Mammary epithelial cell (primary cell): ENCODE measurements at regions of chr7 and their contacts with region 1.

Region 1: GRCh38 chr7:113652501-113652900 is 266.3 kb downstream of the PPP1R3A start:
- DNase-seq: peak; percentile 81
- H3K4me3 ChIP-seq: no peak overlapping the region
- H3K27ac ChIP-seq: peak overlapping the region; percentile 68
- H3K4me1 ChIP-seq: peaks cover 11% of the 10 kb centered on the region
- H3K27me3 ChIP-seq: no peaks in the 10 kb centered on the region
- CTCF ChIP-seq: no peak

Region 2: DNA sequence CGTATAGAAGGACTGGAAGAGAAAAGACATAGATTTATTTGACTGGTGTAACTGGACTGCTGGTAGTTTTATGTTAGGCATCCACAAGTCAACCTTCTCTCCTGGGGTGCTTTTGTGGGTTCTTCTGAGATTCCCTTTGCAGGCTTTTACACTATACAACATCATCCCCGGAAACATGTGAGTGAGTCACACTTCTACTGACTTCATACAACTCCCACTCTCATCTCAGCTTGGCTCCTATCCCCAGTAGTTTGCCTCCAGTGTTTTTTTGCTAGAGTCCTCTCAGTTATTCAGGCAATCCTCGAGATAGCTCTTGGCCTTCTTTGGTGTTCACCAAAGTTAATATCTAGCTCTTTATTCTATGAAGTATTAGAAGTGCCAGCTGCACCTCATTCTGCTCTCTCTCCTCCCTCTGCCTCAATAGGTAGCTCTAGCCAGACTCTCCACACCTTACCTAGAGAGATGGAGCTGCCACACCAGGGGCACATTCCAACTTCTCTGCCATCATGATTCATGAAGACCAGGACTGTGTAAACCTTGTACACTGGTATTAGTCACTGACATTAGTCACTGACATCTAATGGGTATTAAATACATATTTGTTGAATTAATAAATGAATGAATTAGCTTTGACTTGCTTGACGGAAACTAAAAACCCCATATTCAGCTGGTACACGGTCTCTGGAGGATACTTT is 15.6 kb before region 1 on chr7:
- CTCF ChIA-PET with region 1: no interaction called
- dilution Hi-C with region 1: no loop called
- in situ Hi-C with region 1: no loop called
- intact Hi-C with region 1: loop called (anchors 2 kb)
- DNase-seq: peak; percentile 94
- H3K4me3 ChIP-seq: peak overlapping the region in 1 of 3 experiments; percentile 14
- H3K27ac ChIP-seq: peak overlapping the region; percentile 96
- H3K4me1 ChIP-seq: peaks cover 55% of the 10 kb centered on the region
- H3K27me3 ChIP-seq: no peaks in the 10 kb centered on the region
- CTCF ChIP-seq: no peak